ENCODE measurements at regions of chr2 and their contacts with region 1.

Region 1: GRCh38 chr2:105782123-105782522 is 37.4 kb downstream of the NCK2 start:
- DNase-seq: no peak
- H3K4me3 Mint-ChIP-seq: peak overlapping the region; percentile 36
- H3K27ac Mint-ChIP-seq: peak overlapping the region; percentile 61
- H3K4me1 Mint-ChIP-seq: peaks cover 91% of the 10 kb centered on the region
- H3K27me3 Mint-ChIP-seq: no peaks in the 10 kb centered on the region

Region 2: GRCh38 chr2:105769504-105769903 is 12.6 kb before region 1 on chr2:
- CTCF ChIA-PET with region 1: interaction called, 9 read pairs
- intact Hi-C with region 1: loop called (anchors 1 kb)
- DNase-seq: no peak
- H3K4me3 Mint-ChIP-seq: no peak overlapping the region
- H3K27ac Mint-ChIP-seq: peak overlapping the region; percentile 32
- H3K4me1 Mint-ChIP-seq: peaks cover 94% of the 10 kb centered on the region
- H3K27me3 Mint-ChIP-seq: no peaks in the 10 kb centered on the region

Region 3: DNA sequence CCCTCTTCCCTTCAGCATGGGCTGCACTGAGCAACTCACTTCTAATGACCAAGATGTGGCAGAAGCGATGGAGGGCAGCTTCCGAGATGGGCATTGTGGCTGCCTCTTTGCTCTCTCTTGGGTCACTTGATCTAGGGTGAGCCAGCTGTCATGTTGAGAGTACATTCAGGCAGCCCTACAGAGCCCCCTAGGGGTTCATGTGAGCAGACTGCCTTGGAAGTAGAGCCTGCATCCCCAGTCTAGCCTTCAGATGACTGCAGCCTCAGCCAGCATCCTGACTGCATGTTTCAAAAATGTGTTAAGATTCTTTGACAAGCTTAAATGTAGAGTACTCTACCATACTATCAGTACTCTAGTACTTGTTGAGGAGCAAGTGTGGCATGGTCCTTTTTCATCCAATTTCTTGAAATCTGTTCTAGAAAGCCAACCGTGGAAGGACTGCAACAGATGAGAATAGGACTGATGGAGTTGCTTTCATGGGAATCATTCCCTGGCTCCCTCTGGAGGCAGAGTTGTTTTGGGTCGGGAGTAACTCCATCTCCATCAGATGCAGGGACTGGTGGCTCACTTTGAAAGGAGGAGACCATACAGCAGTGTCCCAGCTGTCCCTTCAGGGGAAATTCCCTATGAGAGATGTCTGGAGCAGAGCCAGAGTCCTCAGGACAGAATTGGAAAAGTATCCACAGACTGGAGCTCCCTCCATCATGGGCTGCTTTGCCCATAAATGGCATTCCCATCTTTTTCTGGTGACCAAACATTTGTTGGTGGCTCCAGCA is 106.7 kb after region 1 on chr2:
- CTCF ChIA-PET with region 1: interaction called, 3 read pairs
- intact Hi-C with region 1: loop called (anchors 1 kb)
- DNase-seq: peak; percentile 69
- H3K4me3 Mint-ChIP-seq: no peak overlapping the region
- H3K27ac Mint-ChIP-seq: peak overlapping the region; percentile 15
- H3K4me1 Mint-ChIP-seq: peaks cover 61% of the 10 kb centered on the region
- H3K27me3 Mint-ChIP-seq: no peaks in the 10 kb centered on the region

Region 4: DNA sequence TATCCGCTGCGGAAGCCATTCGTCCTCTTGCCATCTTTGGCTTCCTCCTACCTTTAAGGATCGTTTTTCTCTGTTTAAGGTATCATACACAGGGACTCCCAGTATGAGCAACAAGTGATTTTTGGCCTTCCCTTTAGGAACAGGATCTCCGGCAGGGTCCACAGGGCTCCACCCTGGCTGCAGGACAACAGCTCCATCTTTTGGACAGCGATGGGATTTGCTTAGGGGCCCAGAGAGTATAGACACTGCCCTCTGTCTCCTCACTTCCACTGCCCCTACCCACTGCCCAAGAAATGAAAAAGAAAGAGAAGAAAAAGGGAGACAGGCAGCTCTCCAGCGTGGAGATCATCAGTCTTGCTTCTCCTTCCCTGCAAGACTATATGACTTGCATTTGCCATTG is 187.4 kb after region 1 on chr2:
- CTCF ChIA-PET with region 1: interaction called, 6 read pairs
- intact Hi-C with region 1: loop called (anchors 1 kb)
- DNase-seq: peak; percentile 35
- H3K4me3 Mint-ChIP-seq: no peak overlapping the region
- H3K27ac Mint-ChIP-seq: no peak overlapping the region
- H3K4me1 Mint-ChIP-seq: peaks cover 23% of the 10 kb centered on the region
- H3K27me3 Mint-ChIP-seq: no peaks in the 10 kb centered on the region